Heart left ventricle (tissue), 16 donors: ENCODE measurements at regions of chr3 and their contacts with region 1.

Region 1: GRCh38 chr3:123745184-123745855 is 138.8 kb downstream of the MYLK start:
- DNase-seq: no peak
- ATAC-seq: no peak
- H3K4me3 ChIP-seq: no peak overlapping the region
- H3K27ac ChIP-seq: no peak overlapping the region
- H3K4me1 ChIP-seq: peaks cover 0 to 5% (median under 1%) of the 10 kb centered on the region in 12 donors
- H3K27me3 ChIP-seq: no peaks in the 10 kb centered on the region
- CTCF ChIP-seq: peak in 5 of 12 donors; percentile 20 to 26 (median 21)
- POLR2A ChIP-seq: no peak

Region 2: DNA sequence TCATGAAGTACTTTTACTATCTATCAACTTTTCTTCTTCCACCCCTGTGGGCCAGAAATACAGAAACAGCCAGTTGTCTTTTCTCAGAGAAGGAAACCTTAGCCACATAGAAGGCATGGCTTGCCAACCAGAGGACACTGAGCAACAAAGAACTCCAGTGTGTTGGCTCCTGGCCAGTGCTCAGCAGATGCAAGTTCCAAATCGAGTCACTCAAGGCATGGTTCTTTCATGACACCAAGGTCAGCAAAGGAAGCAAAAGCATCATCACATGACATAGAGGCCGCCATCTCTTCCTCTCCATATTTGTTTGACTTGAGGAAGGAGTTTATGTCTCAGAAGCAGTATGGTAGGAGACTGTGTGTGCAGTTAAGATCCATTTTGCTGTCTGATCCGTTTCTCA is 46.6 kb after region 1 on chr3:
- intact Hi-C with region 1: no loop called
- DNase-seq: no peak
- ATAC-seq: no peak
- H3K4me3 ChIP-seq: no peak overlapping the region
- H3K27ac ChIP-seq: no peak overlapping the region
- H3K4me1 ChIP-seq: no peaks in the 10 kb centered on the region
- H3K27me3 ChIP-seq: no peaks in the 10 kb centered on the region
- CTCF ChIP-seq: no peak
- POLR2A ChIP-seq: no peak

Region 3: GRCh38 chr3:123884203-123884831 is 139.0 kb after region 1 on chr3 and contains the start of gene MYLK:
- intact Hi-C with region 1: loop called in 1 of 10 experiments (anchors 10 kb)
- DNase-seq: peak; percentile 70 to 87 (median 80)
- ATAC-seq: peak; percentile 87 to 95 (median 94)
- H3K4me3 ChIP-seq: peak within 1 kb of the TSS in 11 of 12 donors; percentile 25 to 64 (median 49)
- H3K27ac ChIP-seq: peak within 1 kb of the TSS in 1 of 12 donors; percentile 21
- H3K4me1 ChIP-seq: peaks cover 0 to 13% (median 5%) of the 10 kb centered on the region in 12 donors
- H3K27me3 ChIP-seq: peaks cover 0 to 35% (median 0%) of the 10 kb centered on the region in 9 donors
- CTCF ChIP-seq: no peak
- POLR2A ChIP-seq: no peak
- total RNA-seq, gene MYLK: 10.5 to 20.7 (median 12.7) TPM